ENCODE measurements at regions of chr1 and their contacts with region 1.

Region 1: DNA sequence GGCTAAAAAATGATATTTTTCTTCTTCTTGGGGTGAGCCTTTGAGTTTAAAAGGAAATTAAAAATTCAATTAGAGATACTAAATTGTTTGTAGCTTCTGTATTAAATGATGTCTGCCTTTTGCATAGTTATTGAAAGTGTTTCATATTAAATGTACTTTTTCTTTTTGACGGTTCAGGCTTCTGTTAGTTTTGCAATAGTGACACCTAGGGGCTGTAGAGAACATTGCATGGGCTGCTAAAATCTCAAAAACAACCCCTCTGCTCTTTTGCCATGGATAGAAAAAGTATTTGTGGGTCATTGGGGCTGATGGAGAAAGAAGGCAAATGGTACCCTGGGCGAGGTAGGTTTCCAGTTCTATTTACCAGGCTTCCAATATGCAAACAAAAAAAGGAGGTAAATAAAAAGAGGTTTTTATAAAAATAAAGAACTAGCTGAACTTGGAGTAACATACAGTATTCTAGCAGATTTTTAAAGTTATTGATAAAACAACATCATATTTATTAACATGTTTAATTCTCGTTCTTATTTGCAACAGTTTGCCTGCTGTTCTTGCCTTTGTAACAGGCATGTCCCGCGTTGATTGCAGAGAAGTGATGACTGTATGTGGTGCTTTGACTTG is 115.4 kb upstream of the HOOK1 start:
- DNase-seq: no peak
- ATAC-seq: peak; percentile 47
- H3K4me3 ChIP-seq: no peak overlapping the region
- H3K27ac ChIP-seq: no peak overlapping the region
- H3K4me1 ChIP-seq: peaks cover 10% of the 10 kb centered on the region; the same call in 1 of the 2 replicates
- H3K27me3 ChIP-seq: no peaks in the 10 kb centered on the region
- CTCF ChIP-seq: peak; percentile 83 to 89 (median 89)
- EP300 ChIP-seq: no peak
- POLR2A ChIP-seq: no peak
- RAD21 ChIP-seq: peak; percentile 98

Region 2: GRCh38 chr1:58773406-58773840 is 925.9 kb before region 1 on chr1:
- CTCF ChIA-PET with region 1: interaction called, 39 read pairs
- POLR2A ChIA-PET with region 1: no interaction called
- RAD21 ChIA-PET with region 1: interaction called, 12 read pairs
- SMC1A ChIA-PET with region 1: interaction called, 13 read pairs
- in situ Hi-C with region 1: no loop called
- intact Hi-C with region 1: no loop called
- DNase-seq: no peak
- ATAC-seq: peak; percentile 81
- H3K4me3 ChIP-seq: no peak overlapping the region
- H3K27ac ChIP-seq: no peak overlapping the region
- H3K4me1 ChIP-seq: peaks cover 10% of the 10 kb centered on the region
- H3K27me3 ChIP-seq: peaks cover 0 to 3% of the 10 kb centered on the region in 2 experiments; a peak in 2 of 4 replicates
- CTCF ChIP-seq: no peak
- EP300 ChIP-seq: no peak
- POLR2A ChIP-seq: no peak
- RAD21 ChIP-seq: no peak

Region 3: GRCh38 chr1:59046730-59047157 is 652.6 kb before region 1 on chr1:
- CTCF ChIA-PET with region 1: interaction called, 13 read pairs
- POLR2A ChIA-PET with region 1: no interaction called
- RAD21 ChIA-PET with region 1: interaction called, 6 read pairs
- SMC1A ChIA-PET with region 1: interaction called, 8 read pairs
- in situ Hi-C with region 1: no loop called
- intact Hi-C with region 1: no loop called
- DNase-seq: peak; percentile 59
- ATAC-seq: peak; percentile 99
- H3K4me3 ChIP-seq: no peak overlapping the region
- H3K27ac ChIP-seq: peak overlapping the region; percentile 70
- H3K4me1 ChIP-seq: peaks cover 26% of the 10 kb centered on the region
- H3K27me3 ChIP-seq: no peaks in the 10 kb centered on the region
- CTCF ChIP-seq: peak; percentile 42 to 45 (median 44); a peak in 5 of 6 replicates
- EP300 ChIP-seq: peak in 1 of 2 experiments; percentile 45; a peak in 1 of 4 replicates
- POLR2A ChIP-seq: no peak
- RAD21 ChIP-seq: peak; percentile 66

Region 4: GRCh38 chr1:59296358-59297256 is 402.7 kb before region 1 on chr1 and contains the start of gene FGGY:
- CTCF ChIA-PET with region 1: interaction called, 10 read pairs
- POLR2A ChIA-PET with region 1: no interaction called
- RAD21 ChIA-PET with region 1: interaction called, 10 read pairs
- SMC1A ChIA-PET with region 1: interaction called, 11 read pairs
- in situ Hi-C with region 1: loop called (anchors 5 kb)
- intact Hi-C with region 1: loop called (anchors 2 kb)
- DNase-seq: peak; percentile 89
- ATAC-seq: peak; percentile 97
- H3K4me3 ChIP-seq: peak within 1 kb of the TSS; percentile 92
- H3K27ac ChIP-seq: peak within 1 kb of the TSS; percentile 80
- H3K4me1 ChIP-seq: peaks cover 3% of the 10 kb centered on the region; the same call in 1 of the 2 replicates
- H3K27me3 ChIP-seq: no peaks in the 10 kb centered on the region
- CTCF ChIP-seq: no peak
- EP300 ChIP-seq: no peak
- POLR2A ChIP-seq: peak; percentile 89
- RAD21 ChIP-seq: 0 out of 2 replicates have a peak, but pooled peaks have one; percentile 10
- polyA plus RNA-seq, gene FGGY: 9.1 to 9.5 TPM

Region 5: GRCh38 chr1:59577774-59578173 is 121.6 kb before region 1 on chr1:
- CTCF ChIA-PET with region 1: interaction called, 4 read pairs
- POLR2A ChIA-PET with region 1: no interaction called
- RAD21 ChIA-PET with region 1: no interaction called
- SMC1A ChIA-PET with region 1: interaction called, 12 read pairs
- in situ Hi-C with region 1: no loop called
- intact Hi-C with region 1: no loop called
- DNase-seq: no peak
- ATAC-seq: peak; percentile 94
- H3K4me3 ChIP-seq: no peak overlapping the region
- H3K27ac ChIP-seq: no peak overlapping the region
- H3K4me1 ChIP-seq: no peaks in the 10 kb centered on the region
- H3K27me3 ChIP-seq: no peaks in the 10 kb centered on the region
- CTCF ChIP-seq: no peak
- EP300 ChIP-seq: no peak
- POLR2A ChIP-seq: no peak
- RAD21 ChIP-seq: no peak

Region 6: GRCh38 chr1:59750328-59751003 is 51.1 kb after region 1 on chr1:
- CTCF ChIA-PET with region 1: interaction called, 5 read pairs
- POLR2A ChIA-PET with region 1: no interaction called
- RAD21 ChIA-PET with region 1: interaction called, 5 read pairs
- SMC1A ChIA-PET with region 1: interaction called, 10 read pairs
- in situ Hi-C with region 1: no loop called
- intact Hi-C with region 1: no loop called
- DNase-seq: no peak
- ATAC-seq: no peak
- H3K4me3 ChIP-seq: no peak overlapping the region
- H3K27ac ChIP-seq: no peak overlapping the region
- H3K4me1 ChIP-seq: peaks cover 17% of the 10 kb centered on the region
- H3K27me3 ChIP-seq: no peaks in the 10 kb centered on the region
- CTCF ChIP-seq: no peak
- EP300 ChIP-seq: no peak
- POLR2A ChIP-seq: no peak
- RAD21 ChIP-seq: no peak

Region 7: GRCh38 chr1:59986516-59987310 is 287.4 kb after region 1 on chr1:
- CTCF ChIA-PET with region 1: no interaction called
- POLR2A ChIA-PET with region 1: no interaction called
- RAD21 ChIA-PET with region 1: no interaction called
- SMC1A ChIA-PET with region 1: no interaction called
- in situ Hi-C with region 1: no loop called
- intact Hi-C with region 1: no loop called
- DNase-seq: no peak
- ATAC-seq: no peak
- H3K4me3 ChIP-seq: no peak overlapping the region
- H3K27ac ChIP-seq: no peak overlapping the region
- H3K4me1 ChIP-seq: no peaks in the 10 kb centered on the region
- H3K27me3 ChIP-seq: no peaks in the 10 kb centered on the region; a peak in 2 of 4 replicates
- CTCF ChIP-seq: no peak
- EP300 ChIP-seq: no peak
- POLR2A ChIP-seq: no peak
- RAD21 ChIP-seq: no peak

Region 8: GRCh38 chr1:60118085-60118484 is 418.7 kb after region 1 on chr1:
- CTCF ChIA-PET with region 1: no interaction called
- POLR2A ChIA-PET with region 1: no interaction called
- RAD21 ChIA-PET with region 1: no interaction called
- SMC1A ChIA-PET with region 1: no interaction called
- in situ Hi-C with region 1: no loop called
- intact Hi-C with region 1: no loop called
- DNase-seq: no peak
- ATAC-seq: no peak
- H3K4me3 ChIP-seq: no peak overlapping the region
- H3K27ac ChIP-seq: no peak overlapping the region
- H3K4me1 ChIP-seq: no peaks in the 10 kb centered on the region
- H3K27me3 ChIP-seq: no peaks in the 10 kb centered on the region
- CTCF ChIP-seq: no peak
- EP300 ChIP-seq: no peak
- POLR2A ChIP-seq: no peak
- RAD21 ChIP-seq: no peak